ENCODE measurements at regions of chr17 and their contacts with region 1.

Region 1: DNA sequence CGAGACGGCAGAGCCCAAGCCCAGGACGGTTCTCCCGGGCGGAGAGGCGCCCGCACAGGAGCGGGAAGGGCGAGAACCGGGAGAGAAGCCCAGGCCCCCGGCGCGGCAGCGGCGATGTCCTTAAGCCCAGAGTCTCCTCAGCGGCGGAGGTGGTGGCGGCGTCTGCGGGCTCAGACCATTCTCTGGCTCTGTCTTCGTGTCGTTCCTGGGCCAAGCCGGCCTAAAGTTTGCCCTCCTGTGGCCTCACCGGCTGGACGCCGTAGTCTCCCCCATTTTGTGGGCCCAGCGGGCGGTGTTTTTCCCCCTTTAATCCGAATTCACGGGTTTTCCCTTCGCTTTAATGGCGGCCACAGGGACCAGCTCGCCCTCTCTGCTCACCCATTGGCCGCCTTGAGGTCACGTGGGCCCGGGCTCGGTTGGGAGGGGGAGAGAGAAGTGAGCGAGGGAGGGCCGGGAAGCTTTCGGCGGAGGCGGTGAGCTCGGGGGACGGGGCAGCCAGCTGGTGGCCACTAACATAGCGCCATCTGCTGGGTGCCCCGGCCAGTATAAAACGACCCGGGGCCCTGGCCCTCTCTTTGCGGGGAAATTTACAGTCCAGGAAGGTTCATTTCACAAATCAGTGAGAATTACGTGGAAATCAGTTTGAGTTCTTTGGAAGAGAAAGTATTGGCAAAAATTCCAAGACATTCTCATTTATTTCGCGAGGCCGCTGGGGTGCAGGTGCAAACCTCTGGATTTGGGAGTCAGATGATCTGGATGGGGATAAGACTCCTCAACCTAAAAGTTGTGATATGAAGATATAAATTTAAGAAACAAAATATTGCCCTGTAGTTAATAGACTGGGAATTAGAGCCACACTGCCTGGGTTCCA is 755 bp upstream of the MED13 start:
- DNase-seq: peak; percentile 98
- H3K4me3 ChIP-seq: peak overlapping the region; percentile 89 to 92
- H3K27ac ChIP-seq: peak overlapping the region; percentile 97 to 99
- H3K4me1 ChIP-seq: no peaks in the 10 kb centered on the region
- H3K27me3 ChIP-seq: no peaks in the 10 kb centered on the region
- CTCF ChIP-seq: peak; percentile 80 to 96 (median 96)
- POLR2A ChIP-seq: peak; percentile 88

Region 2: DNA sequence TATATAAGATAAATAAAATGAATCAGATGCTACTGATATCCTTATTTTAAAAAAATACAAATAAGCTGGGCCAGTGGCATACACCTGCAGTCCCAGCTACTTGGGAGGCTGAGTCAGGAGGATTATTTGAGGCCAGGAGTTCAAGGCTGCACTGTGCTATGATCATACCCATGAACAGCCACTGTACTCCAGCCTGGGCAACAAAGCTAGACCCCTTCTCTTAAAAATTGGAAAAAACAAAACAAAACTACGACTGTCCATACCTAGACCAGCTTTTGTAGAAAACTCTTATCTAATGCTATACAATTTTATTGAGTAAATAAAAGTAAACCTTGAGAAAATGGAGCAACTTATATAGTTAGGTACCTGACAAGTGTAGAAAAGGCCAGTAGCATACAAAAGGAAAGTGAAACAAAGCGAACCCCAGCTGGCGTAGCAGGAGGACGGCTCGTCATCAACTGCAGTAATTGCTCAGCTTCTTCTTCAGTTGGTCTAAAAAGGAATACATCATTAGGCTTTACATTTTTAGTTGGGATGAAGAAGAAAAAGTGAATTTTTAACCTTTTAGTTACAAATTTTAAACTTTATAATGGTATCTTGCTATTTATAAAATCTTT is 161.6 kb before region 1 on chr17:
- intact Hi-C with region 1: no loop called
- DNase-seq: no peak
- H3K4me3 ChIP-seq: no peak overlapping the region
- H3K27ac ChIP-seq: no peak overlapping the region
- H3K4me1 ChIP-seq: no peaks in the 10 kb centered on the region
- H3K27me3 ChIP-seq: no peaks in the 10 kb centered on the region
- CTCF ChIP-seq: no peak
- POLR2A ChIP-seq: no peak

Region 3: DNA sequence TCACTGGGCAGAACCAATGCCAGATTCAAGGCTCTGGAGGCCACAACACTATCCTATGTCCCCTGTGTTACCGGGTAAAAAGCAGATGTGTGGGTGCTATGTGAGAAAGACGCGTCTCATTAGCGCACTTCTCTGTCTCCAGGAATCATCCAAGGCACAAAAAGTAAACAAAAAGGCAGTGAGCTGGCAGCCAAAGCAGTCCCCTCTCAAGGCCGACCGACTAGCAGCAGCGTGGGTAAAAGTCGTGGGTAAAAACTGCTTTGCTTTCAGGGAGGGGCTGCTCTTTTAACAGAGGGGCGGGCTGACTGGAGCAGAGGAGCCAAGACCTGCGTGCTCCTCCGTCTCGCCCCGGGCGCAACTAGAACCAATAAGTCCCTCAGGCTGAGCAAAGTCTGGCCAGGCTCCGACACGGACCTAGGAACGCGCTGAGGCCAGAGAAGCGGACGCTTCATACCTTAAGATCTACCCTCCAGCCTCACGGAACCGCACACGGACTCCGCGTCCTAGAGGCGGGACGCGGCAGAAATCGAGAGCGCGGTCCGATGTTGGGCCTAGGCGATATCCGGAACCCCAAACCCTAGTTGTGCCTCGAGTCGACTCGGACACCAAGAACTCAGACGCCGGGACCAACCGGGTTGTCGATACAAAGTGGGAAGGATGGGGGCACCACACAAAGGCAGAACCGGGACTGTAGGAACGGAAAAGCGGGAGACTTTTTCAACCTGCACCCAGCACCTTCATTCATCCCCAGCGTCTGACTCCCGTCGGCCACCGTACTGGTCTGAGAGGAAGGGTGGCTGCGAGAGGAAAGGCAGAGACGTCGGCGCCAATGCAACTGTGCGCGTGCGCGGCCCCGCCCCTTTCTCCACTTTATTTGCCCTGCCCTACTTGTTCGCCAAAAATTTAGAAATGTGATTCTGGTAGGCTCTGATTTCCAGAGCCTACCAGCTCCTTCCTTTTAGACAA is 138.3 kb before region 1 on chr17 and contains the start of gene INTS2:
- intact Hi-C with region 1: loop called (anchors 2 kb)
- DNase-seq: peak; percentile 95
- H3K4me3 ChIP-seq: peak within 1 kb of the TSS; percentile 48
- H3K27ac ChIP-seq: peak within 1 kb of the TSS; percentile 68 to 78
- H3K4me1 ChIP-seq: no peaks in the 10 kb centered on the region
- H3K27me3 ChIP-seq: no peaks in the 10 kb centered on the region
- CTCF ChIP-seq: no peak
- POLR2A ChIP-seq: peak; percentile 57
- total RNA-seq, gene INTS2: 11.7 to 21.9 TPM

Region 4: GRCh38 chr17:61981323-61981722 is 84.5 kb before region 1 on chr17:
- intact Hi-C with region 1: no loop called
- DNase-seq: no peak
- H3K4me3 ChIP-seq: no peak overlapping the region
- H3K27ac ChIP-seq: no peak overlapping the region
- H3K4me1 ChIP-seq: no peaks in the 10 kb centered on the region
- H3K27me3 ChIP-seq: no peaks in the 10 kb centered on the region
- CTCF ChIP-seq: no peak
- POLR2A ChIP-seq: no peak

Region 5: GRCh38 chr17:62024894-62025293 is 40.9 kb before region 1 on chr17:
- intact Hi-C with region 1: no loop called
- DNase-seq: no peak
- H3K4me3 ChIP-seq: no peak overlapping the region
- H3K27ac ChIP-seq: no peak overlapping the region
- H3K4me1 ChIP-seq: no peaks in the 10 kb centered on the region
- H3K27me3 ChIP-seq: no peaks in the 10 kb centered on the region
- CTCF ChIP-seq: no peak
- POLR2A ChIP-seq: no peak